MCF 10A (cell line): ENCODE measurements at regions of chr2 and their contacts with region 1.

Region 1: DNA sequence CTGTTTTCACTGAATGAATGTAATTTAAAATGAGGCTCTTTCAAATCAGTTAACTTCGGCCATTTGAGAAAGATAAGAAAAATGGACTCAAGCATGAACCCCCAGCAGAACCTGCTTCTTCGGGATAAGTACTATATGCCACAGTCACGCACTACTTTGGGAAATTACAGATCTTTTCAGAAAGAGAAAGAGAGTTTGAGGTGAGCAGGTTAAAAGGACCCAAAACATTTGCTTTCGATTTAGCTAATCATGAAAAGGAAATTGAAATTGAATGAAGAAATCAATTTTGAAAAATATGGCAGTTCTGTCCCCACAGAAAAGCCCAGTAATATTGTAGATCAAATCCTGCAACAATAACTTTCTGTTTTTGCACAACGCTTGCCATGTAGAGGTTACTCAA is 156.9 kb downstream of the GRB14 start:
- DNase-seq: no peak
- H3K4me3 Mint-ChIP-seq: no peak overlapping the region
- H3K27ac Mint-ChIP-seq: no peak overlapping the region
- H3K4me1 Mint-ChIP-seq: no peaks in the 10 kb centered on the region
- H3K27me3 Mint-ChIP-seq: no peaks in the 10 kb centered on the region
- CTCF ChIP-seq: no peak

Region 2: DNA sequence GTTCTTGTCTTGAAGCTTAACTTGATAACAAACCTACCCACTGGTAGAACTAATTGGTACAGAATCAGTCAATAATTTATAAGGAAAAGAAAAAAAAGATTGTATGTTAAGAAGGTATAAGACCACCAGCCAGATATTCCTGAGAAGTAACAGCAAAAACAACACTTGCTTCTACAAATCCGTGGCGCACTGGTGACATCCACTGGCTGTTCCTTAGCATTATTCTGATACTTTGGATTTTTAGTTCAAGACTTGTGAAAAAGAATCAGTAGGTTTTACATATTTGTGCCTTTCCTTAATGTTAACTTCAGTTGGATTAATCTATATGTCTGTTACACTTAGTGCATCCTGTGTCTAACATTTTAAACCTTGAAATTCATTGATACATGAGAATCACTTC is 15.1 kb after region 1 on chr2:
- CTCF ChIA-PET with region 1: interaction called, 10 read pairs
- POLR2A ChIA-PET with region 1: interaction called, 4 read pairs
- intact Hi-C with region 1: no loop called
- DNase-seq: peak; percentile 42
- H3K4me3 Mint-ChIP-seq: no peak overlapping the region
- H3K27ac Mint-ChIP-seq: no peak overlapping the region
- H3K4me1 Mint-ChIP-seq: no peaks in the 10 kb centered on the region
- H3K27me3 Mint-ChIP-seq: no peaks in the 10 kb centered on the region
- CTCF ChIP-seq: peak; percentile 59

Region 3: DNA sequence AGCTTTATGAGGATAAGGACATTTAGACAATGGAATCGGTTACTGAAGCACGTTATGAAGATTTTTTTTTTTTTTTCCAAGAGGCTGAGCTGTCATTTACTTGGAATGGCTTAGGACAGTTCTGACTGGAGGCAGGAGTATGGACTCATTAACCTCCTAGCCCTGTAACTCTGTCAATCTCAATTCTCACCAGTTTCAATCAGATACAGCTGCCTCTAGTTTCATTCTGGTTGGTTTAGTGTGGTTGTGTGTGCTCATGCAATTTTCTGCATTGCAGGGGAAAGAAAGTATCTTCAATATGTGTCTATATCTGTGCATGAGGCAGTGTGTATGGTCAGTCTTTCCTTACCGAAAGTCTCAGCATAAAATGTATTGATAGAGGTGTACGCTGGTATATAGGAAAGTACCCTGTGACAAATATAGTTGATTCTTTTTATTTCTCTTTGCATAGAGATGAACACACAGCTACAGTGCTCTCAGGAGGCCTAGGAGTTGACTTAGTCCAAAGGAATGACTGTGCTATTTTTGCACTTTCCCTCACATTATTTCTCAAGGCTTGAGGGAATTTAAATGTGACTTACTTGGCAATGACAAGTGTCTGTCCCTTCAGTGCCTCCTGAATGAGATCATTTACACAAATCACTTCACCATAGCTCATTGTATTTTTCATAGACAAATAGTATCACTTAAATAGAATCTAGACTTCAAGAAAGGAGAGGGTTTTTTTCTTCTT is 207.5 kb after region 1 on chr2:
- CTCF ChIA-PET with region 1: no interaction called
- POLR2A ChIA-PET with region 1: no interaction called
- intact Hi-C with region 1: no loop called
- DNase-seq: no peak
- H3K4me3 Mint-ChIP-seq: no peak overlapping the region
- H3K27ac Mint-ChIP-seq: no peak overlapping the region
- H3K4me1 Mint-ChIP-seq: no peaks in the 10 kb centered on the region
- H3K27me3 Mint-ChIP-seq: no peaks in the 10 kb centered on the region
- CTCF ChIP-seq: no peak